ENCODE measurements at regions of chr1 and their contacts with region 1.

Region 1: DNA sequence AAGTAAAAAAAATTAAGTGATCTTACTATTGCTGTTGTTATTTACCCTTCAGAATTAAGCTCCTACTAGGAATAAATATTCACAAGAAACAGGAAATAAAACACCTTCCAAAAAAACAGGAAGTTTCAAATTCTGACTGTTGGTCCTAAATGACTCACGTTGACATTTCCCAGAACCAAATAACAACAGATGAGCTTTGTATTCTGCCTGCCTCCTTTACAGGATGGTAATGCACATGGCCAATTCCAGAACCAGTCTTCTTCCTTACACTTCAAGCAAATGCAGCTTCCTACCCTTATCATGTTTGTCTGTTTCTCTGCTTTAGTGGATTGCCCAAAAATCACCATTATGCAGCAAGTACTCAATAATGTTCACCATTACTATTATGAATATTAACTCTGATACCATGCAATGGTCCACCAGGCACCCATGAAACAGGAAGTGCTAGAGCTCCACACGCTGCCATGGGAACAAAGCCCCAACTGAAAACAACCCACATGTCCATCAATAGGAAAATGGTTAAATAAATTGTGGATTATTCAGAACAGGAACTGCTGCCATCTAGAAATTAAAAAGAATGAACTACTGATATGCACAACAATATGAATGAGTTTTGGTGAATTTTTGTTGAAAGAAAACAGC is 8.9 kb downstream of the CASP9 start:
- DNase-seq: no peak
- H3K4me3 ChIP-seq: no peak overlapping the region
- H3K27ac ChIP-seq: no peak overlapping the region
- H3K4me1 ChIP-seq: peaks cover 0 to 3% of the 10 kb centered on the region in 2 experiments; a peak in 1 of 4 replicates
- H3K27me3 ChIP-seq: no peaks in the 10 kb centered on the region
- CTCF ChIP-seq: no peak
- EP300 ChIP-seq: no peak
- RAD21 ChIP-seq: no peak

Region 2: GRCh38 chr1:15501208-15502032 is 13.7 kb before region 1 on chr1:
- CTCF ChIA-PET with region 1: interaction called, 10 read pairs
- POLR2A ChIA-PET with region 1: no interaction called
- DNase-seq: peak; percentile 78
- H3K4me3 ChIP-seq: no peak overlapping the region; a peak in 1 of 4 replicates
- H3K27ac ChIP-seq: no peak overlapping the region
- H3K4me1 ChIP-seq: no peaks in the 10 kb centered on the region; a peak in 1 of 4 replicates
- H3K27me3 ChIP-seq: no peaks in the 10 kb centered on the region
- CTCF ChIP-seq: peak; percentile 75
- EP300 ChIP-seq: no peak
- RAD21 ChIP-seq: peak; percentile 65

Region 3: GRCh38 chr1:15674386-15675159 is 159.4 kb after region 1 on chr1:
- CTCF ChIA-PET with region 1: no interaction called
- POLR2A ChIA-PET with region 1: no interaction called
- DNase-seq: no peak
- H3K4me3 ChIP-seq: no peak overlapping the region
- H3K27ac ChIP-seq: no peak overlapping the region
- H3K4me1 ChIP-seq: no peaks in the 10 kb centered on the region
- H3K27me3 ChIP-seq: no peaks in the 10 kb centered on the region
- CTCF ChIP-seq: no peak
- EP300 ChIP-seq: no peak
- RAD21 ChIP-seq: no peak

Measured in SK-N-SH (cell line).